Posterior vena cava (tissue), 2 donors: ENCODE measurements at regions of chr1 and their contacts with region 1.

Region 1: DNA sequence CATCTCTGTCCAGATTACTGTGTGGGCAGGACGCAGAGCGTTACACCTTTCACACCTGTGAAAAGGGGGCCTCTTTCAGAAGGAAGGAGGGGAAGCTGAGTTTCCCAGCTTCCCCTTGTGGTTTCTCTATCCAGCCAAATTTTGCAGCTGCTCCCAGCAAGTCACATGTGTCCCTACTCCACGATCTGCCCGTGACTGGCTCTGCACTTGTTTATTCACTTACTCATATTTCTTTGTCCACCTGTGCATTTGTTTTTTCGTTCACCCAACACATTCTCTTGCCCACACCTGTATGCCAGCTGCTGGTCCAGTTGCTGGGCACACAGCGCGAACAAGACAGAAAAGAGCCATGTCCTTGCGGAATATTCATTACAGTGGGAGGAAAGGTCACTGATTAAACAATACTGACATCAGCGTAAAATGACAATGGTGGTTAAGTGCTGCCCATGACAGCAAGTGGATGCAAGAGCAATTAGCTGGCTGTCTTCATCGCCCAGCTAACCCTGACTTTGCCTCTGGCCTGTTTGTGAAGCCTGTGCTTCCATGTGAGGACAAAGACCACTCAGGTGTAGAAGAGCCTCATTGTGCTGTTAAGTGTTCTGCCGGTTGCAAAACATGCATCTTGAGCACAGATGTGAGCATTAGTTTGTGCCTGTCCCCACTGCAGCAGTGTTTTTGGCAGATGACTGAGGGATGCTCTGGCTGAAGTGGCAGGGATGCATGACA is 28.6 kb upstream of the NEK2 start:
- DNase-seq: no peak

Region 2: GRCh38 chr1:211874521-211875347 is 170.8 kb after region 1 on chr1:
- intact Hi-C with region 1: no loop called
- DNase-seq: no peak

Region 3: GRCh38 chr1:212583633-212584032 is 879.7 kb after region 1 on chr1:
- intact Hi-C with region 1: loop called in 1 of 2 experiments (anchors 5 kb)
- DNase-seq: no peak